ENCODE measurements at regions of chr1 and their contacts with region 1.

Region 1: GRCh38 chr1:17494114-17494729 is 45.3 kb upstream of the ARHGEF10L start:
- DNase-seq: peak in 1 of 2 donors; percentile 81
- H3K4me3 ChIP-seq: no peak overlapping the region
- H3K27ac ChIP-seq: no peak overlapping the region
- H3K4me1 ChIP-seq: peaks cover 0 to 3% of the 10 kb centered on the region in 2 donors
- H3K27me3 ChIP-seq: no peaks in the 10 kb centered on the region
- CTCF ChIP-seq: peak; percentile 84 to 91 (median 86)

Region 2: DNA sequence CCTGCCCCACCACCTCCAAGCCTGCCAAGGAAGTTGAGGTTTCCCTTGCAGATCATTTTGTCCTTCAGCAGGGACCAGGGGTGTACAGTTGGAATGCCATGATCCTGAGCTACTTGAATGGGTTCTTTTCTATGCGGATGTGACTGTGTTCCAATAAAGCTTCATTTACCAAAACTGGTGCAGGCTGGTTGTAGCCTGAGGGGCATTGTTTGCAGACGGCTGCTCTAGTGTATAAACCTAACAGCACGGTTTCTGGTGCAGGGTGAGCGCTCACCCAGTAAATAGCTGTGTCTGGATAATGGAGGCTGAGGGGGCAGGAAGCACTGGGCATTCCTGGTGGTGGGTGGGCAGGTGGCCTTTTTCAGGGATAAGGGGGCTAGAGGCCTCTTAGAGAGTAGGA is 188.2 kb after region 1 on chr1:
- intact Hi-C with region 1: loop called (anchors 10 kb)
- DNase-seq: no peak
- H3K4me3 ChIP-seq: no peak overlapping the region
- H3K27ac ChIP-seq: peak overlapping the region in 1 of 2 donors; percentile 38
- H3K4me1 ChIP-seq: peaks cover 0 to 3% of the 10 kb centered on the region in 2 donors
- H3K27me3 ChIP-seq: no peaks in the 10 kb centered on the region
- CTCF ChIP-seq: no peak

Region 3: GRCh38 chr1:17732475-17732874 is 238.3 kb after region 1 on chr1:
- intact Hi-C with region 1: no loop called
- DNase-seq: no peak
- H3K4me3 ChIP-seq: no peak overlapping the region
- H3K27ac ChIP-seq: no peak overlapping the region
- H3K4me1 ChIP-seq: no peaks in the 10 kb centered on the region
- H3K27me3 ChIP-seq: no peaks in the 10 kb centered on the region
- CTCF ChIP-seq: no peak

Region 4: DNA sequence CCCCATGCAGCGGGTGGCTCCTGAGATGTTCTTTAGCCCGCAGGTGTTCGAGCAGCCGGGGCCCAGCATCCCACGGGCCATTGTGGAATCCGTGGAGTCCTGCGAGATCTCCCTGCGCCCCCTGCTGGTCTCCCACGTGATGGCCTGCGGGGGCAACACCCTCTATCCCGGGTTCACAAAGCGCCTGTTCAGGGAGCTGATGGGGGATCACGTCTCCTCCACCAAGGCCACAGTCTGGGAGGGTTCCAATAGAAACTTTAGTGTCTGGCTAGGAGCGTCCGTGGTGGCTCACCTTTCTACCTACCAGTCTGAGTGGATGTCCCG is 331.9 kb after region 1 on chr1:
- intact Hi-C with region 1: loop called (anchors 1 kb)
- DNase-seq: peak in 1 of 2 donors; percentile 63
- H3K4me3 ChIP-seq: no peak overlapping the region
- H3K27ac ChIP-seq: no peak overlapping the region
- H3K4me1 ChIP-seq: no peaks in the 10 kb centered on the region
- H3K27me3 ChIP-seq: no peaks in the 10 kb centered on the region
- CTCF ChIP-seq: peak; percentile 16 to 56 (median 38)

Region 5: DNA sequence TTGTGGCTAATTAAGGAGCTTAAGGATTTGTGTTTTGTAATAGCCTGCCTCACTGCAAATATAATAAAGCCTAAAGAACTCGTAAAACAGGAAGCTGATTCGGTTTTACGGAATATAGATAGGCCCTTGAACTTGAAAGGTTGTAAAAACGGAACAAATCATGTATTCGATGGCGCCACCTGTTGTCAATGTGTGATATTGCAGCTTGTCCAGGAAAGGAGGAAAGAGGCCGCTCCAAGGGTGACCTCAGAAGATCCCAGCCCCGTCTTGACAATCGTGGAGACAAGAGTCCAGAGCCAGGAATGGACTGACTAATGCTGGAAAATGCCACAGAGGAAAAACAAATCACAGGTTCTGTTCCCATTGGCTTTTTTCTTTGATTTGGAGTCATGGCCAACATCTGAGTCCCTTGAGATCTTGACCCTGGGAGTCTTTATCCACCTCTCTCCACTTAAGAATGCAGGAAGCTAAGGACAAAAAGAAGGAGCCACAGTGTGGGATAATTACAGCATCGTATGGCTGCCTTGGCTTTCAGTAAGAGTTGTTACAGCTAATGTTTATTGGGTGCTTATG is 606.4 kb after region 1 on chr1:
- intact Hi-C with region 1: loop called (anchors 5 kb)
- DNase-seq: peak in 1 of 2 donors; percentile 88
- H3K4me3 ChIP-seq: no peak overlapping the region
- H3K27ac ChIP-seq: no peak overlapping the region
- H3K4me1 ChIP-seq: no peaks in the 10 kb centered on the region
- H3K27me3 ChIP-seq: no peaks in the 10 kb centered on the region
- CTCF ChIP-seq: peak; percentile 65 to 88 (median 82)

Region 6: DNA sequence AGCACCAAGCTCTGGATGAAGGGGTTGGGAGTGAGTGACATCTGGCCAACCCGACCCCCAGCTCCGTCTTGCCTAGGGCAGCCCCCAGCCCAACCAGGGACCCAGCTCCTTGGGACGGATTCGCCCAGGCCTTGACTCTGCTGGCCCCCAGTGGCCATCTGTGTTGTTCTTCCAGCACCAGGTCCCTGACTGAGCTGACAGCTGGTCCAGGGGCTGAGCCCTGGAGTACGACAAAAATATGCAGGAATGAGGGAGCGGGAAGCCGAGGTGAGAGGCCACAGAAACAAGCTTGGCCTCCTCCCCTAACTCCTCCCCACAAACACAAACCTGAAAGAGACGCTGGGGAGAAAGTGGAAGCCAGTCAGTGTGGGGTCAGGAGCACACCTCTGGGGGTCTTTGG is 1081.4 kb after region 1 on chr1:
- intact Hi-C with region 1: loop called (anchors 5 kb)
- DNase-seq: peak in 1 of 2 donors; percentile 68
- H3K4me3 ChIP-seq: no peak overlapping the region
- H3K27ac ChIP-seq: no peak overlapping the region
- H3K4me1 ChIP-seq: no peaks in the 10 kb centered on the region
- H3K27me3 ChIP-seq: no peaks in the 10 kb centered on the region
- CTCF ChIP-seq: peak; percentile 16 to 73 (median 61)